Panc1 (cell line): ENCODE measurements at regions of chr1 and their contacts with region 1.

Region 1: GRCh38 chr1:220680085-220680687 is 10.0 kb upstream of the C1orf115 start:
- DNase-seq: peak; percentile 41
- ATAC-seq: peak; percentile 86
- H3K4me3 ChIP-seq: no peak overlapping the region
- H3K27ac ChIP-seq: no peak overlapping the region
- H3K4me1 ChIP-seq: 0 out of 2 replicates have a peak, but pooled peaks cover 2% of the 10 kb centered on the region
- H3K27me3 ChIP-seq: no peaks in the 10 kb centered on the region
- CTCF ChIP-seq: peak; percentile 92

Region 2: GRCh38 chr1:220281159-220281574 is 399.0 kb before region 1 on chr1:
- CTCF ChIA-PET with region 1: no interaction called
- POLR2A ChIA-PET with region 1: no interaction called
- in situ Hi-C with region 1: no loop called
- intact Hi-C with region 1: loop called (anchors 10 kb)
- DNase-seq: no peak
- ATAC-seq: peak; percentile 72; the same call in 1 of the 2 replicates
- H3K4me3 ChIP-seq: no peak overlapping the region
- H3K27ac ChIP-seq: no peak overlapping the region
- H3K4me1 ChIP-seq: no peaks in the 10 kb centered on the region
- H3K27me3 ChIP-seq: peaks cover 25% of the 10 kb centered on the region
- CTCF ChIP-seq: peak; percentile 72

Region 3: DNA sequence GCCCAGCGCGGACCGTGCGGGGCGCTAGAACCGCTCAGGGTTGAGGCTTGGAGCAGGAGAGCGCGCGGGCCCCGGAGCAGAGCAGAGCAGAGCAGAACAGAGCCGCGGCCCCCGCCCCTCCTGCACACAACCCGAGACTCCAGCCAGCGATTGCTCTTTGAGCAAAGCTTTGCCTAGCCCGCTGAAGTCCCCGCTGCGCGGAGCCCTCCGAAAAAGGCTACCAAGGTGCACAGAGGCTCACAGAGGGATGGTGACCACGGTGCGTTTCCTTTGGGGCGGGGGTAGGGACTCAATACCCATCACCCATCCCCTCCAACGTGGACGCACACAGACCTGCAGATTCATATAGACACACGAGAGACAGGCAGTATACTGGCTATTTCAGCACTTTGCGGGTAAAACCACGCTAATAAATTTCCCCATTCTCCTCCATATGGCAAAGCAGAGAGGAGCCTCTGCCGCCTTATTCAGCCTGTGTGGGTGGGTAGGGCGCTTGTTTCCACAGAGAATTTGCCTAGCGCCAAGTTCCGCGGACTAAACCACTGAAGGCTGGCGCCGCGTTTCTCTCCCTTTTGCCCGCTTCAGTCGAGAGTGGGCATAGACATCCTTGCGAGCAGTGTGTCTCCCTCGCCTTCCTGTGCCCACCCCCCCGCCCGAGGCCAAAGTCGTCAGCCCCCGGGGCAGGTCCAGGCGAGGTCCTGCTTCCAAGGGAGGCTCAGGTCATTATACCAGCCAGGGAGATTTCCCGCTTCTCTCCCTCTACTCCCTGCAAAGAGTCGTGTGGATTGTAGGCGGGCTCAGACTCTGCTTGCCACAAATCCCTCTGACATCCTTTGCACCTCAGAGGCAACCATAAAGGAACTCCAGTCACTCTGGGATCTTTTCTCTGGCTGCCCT is 207.6 kb after region 1 on chr1:
- CTCF ChIA-PET with region 1: no interaction called
- POLR2A ChIA-PET with region 1: no interaction called
- in situ Hi-C with region 1: no loop called
- intact Hi-C with region 1: no loop called
- DNase-seq: no peak
- ATAC-seq: peak; percentile 69
- H3K4me3 ChIP-seq: peak overlapping the region in 1 of 2 experiments; percentile 14; a peak in 1 of 4 replicates
- H3K27ac ChIP-seq: no peak overlapping the region
- H3K4me1 ChIP-seq: no peaks in the 10 kb centered on the region; the same call in 1 of the 2 replicates
- H3K27me3 ChIP-seq: peaks cover 12% of the 10 kb centered on the region
- CTCF ChIP-seq: no peak